Ascending aorta (tissue), 2 donors: ENCODE measurements at regions of chr1 and their contacts with region 1.

Region 1: DNA sequence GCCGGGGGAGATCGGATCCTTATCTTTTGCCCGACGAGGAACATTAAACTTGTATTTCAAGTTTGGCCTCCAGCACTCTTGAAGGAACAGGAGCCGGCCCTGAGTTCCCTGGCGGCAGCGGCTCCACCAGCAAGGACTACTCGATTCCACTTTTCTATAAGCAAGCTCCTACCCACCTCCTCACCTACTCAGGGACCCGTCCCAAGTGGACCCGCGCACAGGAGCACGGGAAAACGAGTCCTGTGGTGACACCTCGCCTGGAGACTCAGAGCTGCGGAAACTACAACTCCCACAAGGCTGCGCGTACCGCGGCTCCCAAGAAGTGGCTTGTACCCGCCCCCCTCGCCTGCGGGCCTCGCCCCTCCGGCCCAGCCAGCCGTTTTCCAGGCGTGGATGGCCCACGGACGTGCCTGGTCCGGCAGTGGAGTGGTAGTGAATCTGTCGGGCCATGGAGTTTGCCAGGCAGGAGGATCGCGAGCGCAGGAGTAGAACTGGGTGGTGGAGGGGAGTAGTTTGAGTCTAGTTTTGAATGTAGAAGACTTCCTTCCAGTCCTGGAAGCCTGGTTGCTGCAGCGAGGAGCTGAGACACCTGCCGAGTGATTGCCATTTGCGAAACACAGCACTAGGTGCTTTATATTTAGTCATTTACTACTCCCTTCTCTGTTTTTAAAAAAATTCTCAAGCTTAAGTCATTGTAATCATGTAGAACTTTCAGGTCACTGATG is at the start of gene ACP6:
- DNase-seq: peak; percentile 80 to 97
- H3K4me3 ChIP-seq: peak within 1 kb of the TSS; percentile 71 to 79
- H3K27ac ChIP-seq: peak within 1 kb of the TSS; percentile 57 to 78
- H3K4me1 ChIP-seq: no peaks in the 10 kb centered on the region
- H3K27me3 ChIP-seq: no peaks in the 10 kb centered on the region
- CTCF ChIP-seq: no peak
- total RNA-seq, gene ACP6: 7.5 TPM

Region 2: DNA sequence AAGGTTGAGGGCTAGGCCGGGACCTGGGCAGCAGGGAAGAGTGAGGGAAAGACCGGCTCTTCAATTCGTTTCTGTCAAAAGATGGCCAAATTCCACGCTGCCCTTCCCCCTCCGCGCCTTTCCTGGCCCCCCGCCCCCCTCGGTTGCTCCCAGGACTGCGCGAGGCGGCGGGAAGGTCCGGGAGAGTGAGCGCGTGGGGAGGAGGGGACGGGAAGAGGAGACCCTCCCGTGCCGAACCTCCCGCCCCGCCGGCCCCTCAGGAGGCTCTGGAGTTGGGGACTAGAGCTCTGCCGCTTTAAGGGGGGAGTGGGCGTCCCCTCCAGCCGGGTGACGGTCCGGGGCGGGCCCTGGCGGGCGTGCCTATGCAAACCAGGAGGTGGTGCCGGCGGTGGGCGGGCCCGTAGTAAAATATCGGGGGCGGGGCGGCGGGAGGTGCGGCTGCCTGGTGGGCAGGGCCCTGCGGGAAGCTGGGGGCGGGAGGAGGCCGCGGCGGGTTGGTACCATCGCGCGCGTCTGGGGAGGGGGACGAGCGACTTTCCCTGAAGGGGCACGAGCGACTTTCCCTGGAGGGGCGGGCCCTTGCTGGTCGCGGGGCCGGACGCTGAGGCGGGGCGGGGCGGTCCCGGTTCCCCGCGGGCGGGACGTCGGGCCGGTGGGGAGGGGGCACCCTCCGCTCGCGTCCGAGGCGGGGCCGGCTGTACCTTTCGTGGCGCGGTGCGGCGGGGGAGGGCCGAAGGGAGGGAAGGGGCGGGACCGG is 70.9 kb before region 1 on chr1:
- intact Hi-C with region 1: loop called (anchors 5 kb)
- DNase-seq: peak; percentile 83 to 98
- H3K4me3 ChIP-seq: peak overlapping the region; percentile 88 to 90
- H3K27ac ChIP-seq: peak overlapping the region; percentile 91 to 92
- H3K4me1 ChIP-seq: peaks cover 0 to 15% of the 10 kb centered on the region in 2 donors
- H3K27me3 ChIP-seq: no peaks in the 10 kb centered on the region
- CTCF ChIP-seq: no peak

Region 3: DNA sequence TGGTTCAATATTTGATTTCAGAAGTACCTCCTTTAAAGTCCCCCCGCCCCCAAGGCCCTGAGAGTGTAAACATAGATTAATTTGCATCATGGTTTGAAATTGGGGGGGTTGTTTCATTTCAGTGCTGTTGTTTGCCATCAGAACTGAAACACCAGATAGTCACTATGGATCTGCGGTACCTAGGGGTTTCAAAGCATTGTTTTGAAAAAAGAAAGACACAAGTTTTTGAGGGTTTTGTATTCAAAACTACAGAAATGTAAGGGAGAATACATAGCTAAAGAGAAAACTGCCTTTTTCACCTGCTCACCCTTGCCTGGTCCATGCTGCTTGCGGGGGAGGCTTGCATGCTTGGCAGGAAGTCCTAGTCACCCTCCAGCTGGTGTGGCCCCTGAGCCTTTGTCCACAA is 59.5 kb before region 1 on chr1:
- intact Hi-C with region 1: no loop called
- DNase-seq: no peak
- H3K4me3 ChIP-seq: no peak overlapping the region
- H3K27ac ChIP-seq: no peak overlapping the region
- H3K4me1 ChIP-seq: peaks cover 5 to 10% of the 10 kb centered on the region in 2 donors
- H3K27me3 ChIP-seq: no peaks in the 10 kb centered on the region
- CTCF ChIP-seq: no peak